Posterior vena cava (tissue), 2 donors: ENCODE measurements at regions of chr5 and their contacts with region 1.

Region 1: DNA sequence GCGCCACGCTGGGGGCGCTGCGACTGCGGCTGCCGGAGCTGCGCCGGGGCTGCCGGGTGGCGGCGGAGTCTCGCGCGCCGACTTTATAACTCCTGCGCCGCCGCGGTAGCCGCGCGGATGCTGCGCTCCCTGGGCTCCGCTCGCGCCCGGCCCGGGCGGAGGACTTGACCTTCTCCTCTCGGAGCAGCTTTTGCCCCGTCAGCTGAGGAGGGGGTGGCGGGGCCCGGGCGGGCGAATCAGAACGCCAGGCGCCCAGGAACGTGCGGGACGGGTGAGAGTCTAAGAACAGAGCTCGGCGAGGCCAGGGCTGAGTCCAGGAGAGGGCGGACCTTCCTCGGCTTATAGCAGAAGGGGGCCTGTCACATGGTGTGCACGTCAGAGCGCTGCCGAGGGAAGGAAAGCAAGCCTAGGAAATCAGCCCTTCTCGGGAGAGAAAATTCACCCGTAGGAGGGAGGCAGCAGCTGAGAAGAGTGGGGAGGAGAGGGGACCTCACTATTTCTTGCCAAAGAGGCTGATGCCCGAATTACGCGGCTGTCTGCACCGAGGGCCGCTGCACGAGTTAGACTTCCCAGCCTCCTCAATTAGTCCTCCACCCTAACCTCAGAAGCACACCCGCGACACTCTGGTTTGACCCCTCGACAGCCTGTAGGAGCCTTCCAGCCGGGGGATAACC is at the start of gene FOXD1:
- DNase-seq: peak; percentile 95
- total RNA-seq, gene FOXD1: 10.2 to 15.8 TPM

Region 2: GRCh38 chr5:73088026-73088425 is 360.6 kb before region 1 on chr5:
- intact Hi-C with region 1: loop called in 1 of 2 experiments (anchors 10 kb)
- DNase-seq: no peak

Region 3: DNA sequence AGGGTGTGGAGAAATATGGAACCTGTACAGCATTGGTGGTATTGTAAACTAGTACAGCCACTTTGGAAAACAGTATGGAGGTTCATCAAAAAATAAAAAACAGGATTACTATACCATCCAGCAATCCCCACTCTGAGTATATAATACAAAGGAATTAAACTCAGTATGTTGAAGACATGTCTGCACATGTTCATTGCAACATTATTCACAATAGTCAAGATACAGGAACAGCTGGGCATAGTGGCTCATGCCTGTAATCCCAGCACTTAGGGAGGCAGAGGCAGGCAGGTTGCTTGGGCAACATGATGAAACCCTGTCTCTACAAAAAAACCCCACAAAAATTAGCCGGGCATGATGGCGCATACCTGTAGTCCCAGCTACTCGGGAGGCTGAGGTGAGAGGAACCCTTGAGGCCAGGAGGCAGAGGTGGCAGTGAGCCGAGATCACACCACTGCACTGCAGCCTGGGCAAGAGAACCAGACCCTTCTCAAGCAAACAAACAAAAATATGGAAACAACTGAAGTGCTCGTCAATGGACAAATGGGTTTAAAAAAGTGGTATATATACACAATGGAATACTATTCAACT is 212.0 kb before region 1 on chr5:
- intact Hi-C with region 1: loop called in 1 of 2 experiments (anchors 1 kb)
- DNase-seq: no peak